ENCODE measurements at regions of chr12 and their contacts with region 1.

Region 1: GRCh38 chr12:124422570-124423523 is 128.0 kb downstream of the RFLNA start:
- DNase-seq: peak; percentile 94
- ATAC-seq: peak; percentile 73 to 89 (median 84)
- H3K4me3 ChIP-seq: peak overlapping the region in 8 of 10 donors; percentile 5 to 28 (median 18)
- H3K27ac ChIP-seq: peak overlapping the region; percentile 88 to 97 (median 92)
- H3K4me1 ChIP-seq: peaks cover 34 to 73% (median 58%) of the 10 kb centered on the region in 9 donors
- H3K27me3 ChIP-seq: no peaks in the 10 kb centered on the region
- CTCF ChIP-seq: no peak

Region 2: DNA sequence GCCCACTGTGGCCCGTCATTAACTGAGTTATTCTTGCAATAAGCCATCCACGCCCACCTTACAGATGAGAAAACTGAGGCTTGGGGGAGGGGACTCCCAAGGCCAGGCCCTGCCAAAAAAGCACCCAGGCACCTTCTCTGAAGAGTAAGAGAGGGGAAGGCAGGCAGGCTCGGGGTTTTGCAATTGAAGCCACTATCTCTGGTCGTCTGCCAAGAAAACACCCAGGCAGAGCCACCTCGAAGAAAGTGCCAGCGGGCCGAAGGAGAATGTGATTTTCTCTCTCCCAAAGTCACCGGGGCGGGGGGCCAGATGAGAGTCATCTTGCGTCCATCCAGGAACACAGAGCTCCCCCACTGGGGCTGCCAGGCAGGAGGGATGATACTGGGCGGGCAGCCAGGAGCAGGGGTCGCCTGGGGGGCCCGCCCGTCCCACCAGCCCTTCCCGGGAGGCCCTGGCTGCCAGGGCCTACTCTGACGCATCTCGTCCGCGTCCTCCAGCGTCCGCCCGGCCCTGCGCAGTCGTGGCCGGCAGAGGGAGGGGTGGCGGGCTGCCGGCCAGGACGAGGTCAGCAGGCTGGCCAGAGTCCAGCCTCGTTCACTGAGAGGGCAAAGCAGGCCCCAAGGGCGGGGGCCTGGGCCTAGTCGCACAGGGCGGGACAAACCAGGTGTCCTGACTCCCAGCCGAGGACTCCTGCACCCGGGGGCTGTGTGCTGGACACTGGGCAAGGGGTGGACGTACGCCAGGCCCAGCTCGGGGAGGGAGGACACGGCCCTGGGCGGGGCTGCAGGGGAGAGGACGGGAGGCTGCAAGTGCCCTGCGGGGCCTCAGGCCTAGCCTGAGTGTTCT is 53.6 kb before region 1 on chr12:
- intact Hi-C with region 1: loop called in 2 of 10 experiments (anchors 2 kb)
- DNase-seq: peak; percentile 91 to 94
- ATAC-seq: peak; percentile 83 to 93 (median 88)
- H3K4me3 ChIP-seq: peak overlapping the region in 2 of 10 donors; percentile 4 to 18
- H3K27ac ChIP-seq: peak overlapping the region; percentile 81 to 96 (median 91)
- H3K4me1 ChIP-seq: peaks cover 45 to 83% (median 66%) of the 10 kb centered on the region in 9 donors
- H3K27me3 ChIP-seq: no peaks in the 10 kb centered on the region
- CTCF ChIP-seq: peak; percentile 17 to 69 (median 51)

Region 3: DNA sequence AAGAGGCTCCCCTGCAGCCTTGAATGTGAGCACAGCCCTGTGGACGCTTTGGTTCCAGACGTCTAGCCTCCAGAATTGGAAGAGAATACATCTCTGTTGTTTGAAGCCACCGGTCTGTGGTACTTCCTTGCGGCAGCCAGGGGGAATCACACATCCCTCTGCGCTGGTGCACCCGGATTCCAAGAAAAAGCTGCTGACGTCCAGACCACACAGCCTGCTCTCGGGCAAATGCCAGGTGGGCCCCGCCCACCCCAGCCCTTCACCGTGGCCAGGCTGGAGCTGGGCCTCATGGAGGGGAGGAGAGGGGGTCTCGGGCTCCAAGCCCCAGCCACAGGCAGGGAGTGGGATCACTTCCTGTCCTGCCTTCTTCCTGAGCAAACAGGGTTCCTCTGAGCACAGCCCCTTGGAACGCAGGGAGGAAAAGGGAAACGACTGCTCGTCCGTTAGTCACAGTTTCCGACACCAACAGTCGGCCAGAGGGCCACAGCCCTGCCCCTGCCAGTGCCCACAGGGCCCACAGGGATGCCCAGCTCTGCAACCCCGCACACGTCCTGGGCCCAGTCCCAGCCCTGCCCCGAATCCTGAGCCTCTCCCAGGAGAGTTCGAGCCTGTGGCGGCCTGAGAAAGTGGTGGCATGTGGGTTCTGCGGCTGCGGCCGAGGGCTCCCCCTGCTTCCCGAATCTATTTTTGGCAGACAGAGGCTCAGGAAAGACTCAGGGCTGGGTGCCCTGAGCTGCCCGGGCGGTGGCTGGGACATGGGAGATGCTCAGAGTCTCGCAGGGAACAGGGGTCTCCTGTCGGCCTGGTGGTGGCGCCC is 42.7 kb before region 1 on chr12:
- intact Hi-C with region 1: loop called in 4 of 10 experiments (anchors 5 kb)
- DNase-seq: peak; percentile 62 to 78
- ATAC-seq: peak; percentile 36 to 69 (median 59)
- H3K4me3 ChIP-seq: peak overlapping the region in 2 of 10 donors; percentile 9 to 23
- H3K27ac ChIP-seq: peak overlapping the region; percentile 82 to 99 (median 87)
- H3K4me1 ChIP-seq: peaks cover 38 to 70% (median 54%) of the 10 kb centered on the region in 9 donors
- H3K27me3 ChIP-seq: no peaks in the 10 kb centered on the region
- CTCF ChIP-seq: peak; percentile 29 to 73 (median 61)

Region 4: DNA sequence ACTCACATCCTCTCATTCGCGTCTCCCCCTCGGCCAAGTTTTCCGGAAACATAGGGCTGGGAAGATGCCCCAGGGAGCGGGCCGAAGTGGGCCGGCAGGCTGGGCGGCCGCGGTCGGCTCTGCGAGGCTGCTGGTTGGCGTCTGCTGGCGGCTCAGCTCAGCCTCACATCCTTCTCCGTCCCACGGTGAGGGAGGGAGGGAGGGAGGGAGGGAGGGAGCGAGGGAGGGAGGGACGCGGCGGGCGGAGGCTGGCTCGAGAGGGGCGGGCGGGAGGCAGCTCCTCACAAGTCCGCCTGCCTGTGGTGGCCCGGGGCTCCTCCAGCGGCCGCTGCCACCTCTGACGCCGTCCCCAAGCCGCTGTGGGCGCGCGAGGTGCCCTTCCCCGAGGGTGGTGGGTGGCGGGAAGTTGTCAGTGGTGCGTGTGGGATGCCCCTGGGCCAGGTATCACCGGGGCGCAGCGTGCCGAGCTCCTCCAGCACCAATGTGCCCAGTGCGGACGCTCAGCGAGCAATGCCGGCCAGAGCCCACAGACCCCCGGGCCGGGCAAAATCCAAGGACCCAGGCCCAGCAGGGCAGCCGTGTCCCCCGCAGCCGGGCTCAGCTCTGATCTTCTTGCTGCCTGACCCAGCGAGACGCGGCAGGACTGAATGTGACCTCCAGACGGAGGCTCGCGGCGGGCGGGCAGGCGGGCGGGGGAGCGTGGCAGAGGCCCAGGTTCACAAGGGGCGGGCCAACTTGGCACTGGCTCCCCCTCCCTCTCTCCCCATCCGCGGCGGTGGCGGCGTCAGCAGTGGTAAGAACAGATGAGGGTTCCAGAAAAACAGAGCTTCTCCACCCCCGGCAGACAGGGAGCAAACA is 33.9 kb before region 1 on chr12:
- intact Hi-C with region 1: loop called in 4 of 10 experiments (anchors 5 kb)
- DNase-seq: peak; percentile 86 to 89
- ATAC-seq: peak; percentile 53 to 71 (median 60)
- H3K4me3 ChIP-seq: peak overlapping the region; percentile 41 to 74 (median 59)
- H3K27ac ChIP-seq: peak overlapping the region; percentile 88 to 99 (median 97)
- H3K4me1 ChIP-seq: peaks cover 61 to 100% (median 89%) of the 10 kb centered on the region in 9 donors
- H3K27me3 ChIP-seq: no peaks in the 10 kb centered on the region
- CTCF ChIP-seq: peak in 3 of 9 donors; percentile 8 to 32 (median 25)

Region 5: GRCh38 chr12:124441443-124442194 is 18.8 kb after region 1 on chr12:
- intact Hi-C with region 1: loop called in 1 of 10 experiments (anchors 2 kb)
- DNase-seq: no peak
- ATAC-seq: peak in 3 of 8 donors; percentile 31 to 41 (median 39)
- H3K4me3 ChIP-seq: no peak overlapping the region
- H3K27ac ChIP-seq: peak overlapping the region in 9 of 10 donors; percentile 19 to 81 (median 56)
- H3K4me1 ChIP-seq: peaks cover 15 to 67% (median 36%) of the 10 kb centered on the region in 9 donors
- H3K27me3 ChIP-seq: no peaks in the 10 kb centered on the region
- CTCF ChIP-seq: no peak

Region 6: GRCh38 chr12:124479680-124480468 is 57.0 kb after region 1 on chr12:
- intact Hi-C with region 1: no loop called
- DNase-seq: peak in 1 of 2 donors; percentile 49
- ATAC-seq: peak; percentile 6 to 65 (median 44)
- H3K4me3 ChIP-seq: no peak overlapping the region
- H3K27ac ChIP-seq: peak overlapping the region in 8 of 10 donors; percentile 14 to 80 (median 47)
- H3K4me1 ChIP-seq: peaks cover 5 to 52% (median 29%) of the 10 kb centered on the region in 9 donors
- H3K27me3 ChIP-seq: no peaks in the 10 kb centered on the region
- CTCF ChIP-seq: no peak

Region 7: GRCh38 chr12:124506145-124506831 is 83.4 kb after region 1 on chr12:
- intact Hi-C with region 1: loop called in 1 of 10 experiments (anchors 2 kb)
- DNase-seq: peak; percentile 86 to 89
- ATAC-seq: peak in 7 of 8 donors; percentile 38 to 79 (median 59)
- H3K4me3 ChIP-seq: peak overlapping the region in 6 of 10 donors; percentile 5 to 26 (median 22)
- H3K27ac ChIP-seq: peak overlapping the region; percentile 2 to 93 (median 86)
- H3K4me1 ChIP-seq: peaks cover 36 to 97% (median 86%) of the 10 kb centered on the region in 9 donors
- H3K27me3 ChIP-seq: no peaks in the 10 kb centered on the region
- CTCF ChIP-seq: no peak

Region 8: GRCh38 chr12:124852329-124852831 is 429.5 kb after region 1 on chr12:
- intact Hi-C with region 1: no loop called
- DNase-seq: peak in 1 of 2 donors; percentile 62
- ATAC-seq: peak in 6 of 8 donors; percentile 33 to 66 (median 56)
- H3K4me3 ChIP-seq: no peak overlapping the region
- H3K27ac ChIP-seq: peak overlapping the region in 4 of 10 donors; percentile 7 to 73 (median 50)
- H3K4me1 ChIP-seq: peaks cover 16 to 70% (median 36%) of the 10 kb centered on the region in 9 donors
- H3K27me3 ChIP-seq: no peaks in the 10 kb centered on the region
- CTCF ChIP-seq: no peak

Measured in heart right ventricle (tissue), 16 donors.